HEK293 (cell line): ENCODE measurements at regions of chr16 and their contacts with region 1.

Region 1: GRCh38 chr16:19907161-19907992 is 22.7 kb upstream of the GPRC5B start:
- H3K4me3 ChIP-seq: no peak overlapping the region
- H3K27ac ChIP-seq: no peak overlapping the region
- H3K4me1 ChIP-seq: no peaks in the 10 kb centered on the region
- CTCF ChIP-seq: peak; percentile 89

Region 2: DNA sequence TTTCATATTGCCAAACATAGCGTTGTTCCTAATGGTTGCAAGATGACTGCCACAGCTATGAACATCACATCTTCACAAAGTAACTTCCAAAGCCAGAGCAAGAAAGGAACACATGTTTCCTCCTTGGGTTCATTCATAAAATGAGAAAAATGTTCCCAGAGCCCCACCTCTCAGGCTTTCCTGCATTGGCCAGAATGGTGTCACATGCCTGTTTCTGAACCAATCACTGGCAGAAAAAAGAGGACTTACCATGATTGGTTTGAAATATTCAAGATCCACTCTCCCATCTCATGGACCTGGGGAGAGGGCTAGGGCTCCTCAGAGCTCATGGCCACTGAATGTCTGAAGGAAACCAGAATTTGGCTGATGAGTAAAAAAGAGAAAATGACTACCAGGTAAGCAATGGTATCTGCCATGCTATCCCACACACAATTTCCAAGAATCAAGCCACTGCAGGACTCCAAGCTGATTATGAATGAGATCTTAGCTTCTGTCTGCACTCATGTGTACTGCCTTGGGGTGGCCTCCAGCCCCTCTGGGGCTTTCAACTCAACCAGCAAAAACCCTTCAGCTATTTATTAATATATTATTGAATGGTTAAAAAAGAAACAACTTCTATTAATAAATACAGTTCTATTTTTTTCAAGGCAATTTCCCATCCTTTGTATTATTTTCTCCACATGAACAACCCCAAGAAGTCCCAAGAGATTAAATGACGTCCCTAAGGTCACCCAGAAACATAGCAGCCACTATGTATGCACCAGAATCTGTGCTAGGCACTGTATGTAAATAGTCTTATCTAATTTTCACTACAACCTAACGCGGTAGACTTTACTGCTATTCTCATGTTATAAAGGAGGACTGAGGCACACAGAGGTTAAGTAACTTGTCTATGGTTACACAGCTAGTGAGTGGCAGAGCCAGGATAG is 551.1 kb before region 1 on chr16:
- CTCF ChIA-PET with region 1: no interaction called
- POLR2A ChIA-PET with region 1: no interaction called
- H3K4me3 ChIP-seq: no peak overlapping the region
- H3K27ac ChIP-seq: no peak overlapping the region
- H3K4me1 ChIP-seq: no peaks in the 10 kb centered on the region
- CTCF ChIP-seq: no peak

Region 3: GRCh38 chr16:19860166-19861041 is 47.0 kb before region 1 on chr16:
- CTCF ChIA-PET with region 1: no interaction called
- POLR2A ChIA-PET with region 1: no interaction called
- H3K4me3 ChIP-seq: no peak overlapping the region
- H3K27ac ChIP-seq: no peak overlapping the region
- H3K4me1 ChIP-seq: peaks cover 14% of the 10 kb centered on the region
- CTCF ChIP-seq: no peak

Region 4: DNA sequence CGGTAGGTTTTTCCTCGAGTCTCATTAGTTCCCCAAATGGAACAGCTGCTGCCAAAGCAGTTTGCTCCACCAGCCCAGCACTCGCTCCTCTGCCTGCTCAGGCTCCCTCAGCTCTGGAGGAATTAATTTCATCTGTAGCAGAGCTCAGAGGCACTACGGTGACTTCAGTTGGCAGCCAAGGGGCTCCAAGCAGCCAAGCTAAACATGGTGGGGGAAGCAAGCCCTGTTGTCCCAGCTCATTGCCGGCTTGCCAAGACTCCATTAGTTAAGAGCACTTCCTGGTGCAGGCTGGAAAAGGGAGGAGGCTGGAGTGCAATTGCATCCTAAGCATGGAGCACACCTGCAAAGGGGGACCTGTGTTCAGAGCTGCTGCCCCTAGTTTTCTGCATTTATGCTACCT is 55.9 kb after region 1 on chr16:
- CTCF ChIA-PET with region 1: interaction called, 12 read pairs
- POLR2A ChIA-PET with region 1: no interaction called
- H3K4me3 ChIP-seq: no peak overlapping the region
- H3K27ac ChIP-seq: no peak overlapping the region
- H3K4me1 ChIP-seq: no peaks in the 10 kb centered on the region
- CTCF ChIP-seq: no peak